ENCODE measurements at regions of chr6 and their contacts with region 1.

Region 1: DNA sequence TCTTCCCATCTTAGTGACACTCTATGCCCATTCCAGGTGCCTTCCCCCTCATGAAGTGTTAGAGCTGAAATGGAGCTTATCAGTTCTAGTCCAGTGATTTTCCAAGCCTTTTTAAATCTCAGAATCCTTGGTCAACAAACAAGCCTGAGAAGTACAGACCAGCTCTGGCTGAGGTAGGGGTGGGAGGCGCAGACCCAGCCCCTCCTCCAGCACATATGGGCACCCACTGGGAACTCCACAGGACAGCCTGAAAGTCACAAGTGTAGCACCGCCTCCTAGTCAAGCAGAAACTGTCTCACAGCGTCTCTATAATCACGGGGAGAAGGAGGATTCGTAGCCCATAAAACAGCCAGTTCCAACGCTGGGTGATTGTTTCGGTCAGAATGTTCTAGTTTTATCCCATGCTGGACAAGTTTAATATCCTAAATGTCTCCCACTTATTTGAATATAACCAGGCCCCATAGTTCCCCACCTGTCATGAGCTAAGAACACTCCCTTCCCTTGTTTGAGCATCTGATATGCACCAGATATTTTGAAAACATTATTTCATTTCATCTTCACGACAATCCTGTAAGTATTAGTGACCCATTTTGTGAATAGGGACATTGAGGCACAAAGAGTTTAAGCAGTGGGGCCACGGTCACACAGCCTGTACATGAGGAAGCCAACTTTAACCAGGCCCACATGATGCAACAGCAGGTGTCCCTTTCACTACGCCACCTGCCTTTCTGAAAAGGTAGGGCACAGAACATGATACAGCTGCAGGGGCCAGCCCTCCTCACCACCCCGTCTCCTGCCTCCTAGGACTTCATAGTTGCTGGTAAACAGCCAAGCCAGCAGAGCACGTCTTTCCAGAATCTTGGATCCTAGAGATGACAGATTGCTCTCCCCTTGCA is 40.1 kb downstream of the TRAF3IP2 start:
- DNase-seq: no peak
- ATAC-seq: peak; percentile 93
- H3K4me3 ChIP-seq: no peak overlapping the region
- H3K27ac ChIP-seq: no peak overlapping the region
- H3K4me1 ChIP-seq: peaks cover 0 to 11% of the 10 kb centered on the region in 2 experiments; a peak in 1 of 4 replicates
- H3K27me3 ChIP-seq: no peaks in the 10 kb centered on the region
- CTCF ChIP-seq: peak; percentile 5 to 55 (median 50); a peak in 4 of 6 replicates
- POLR2A ChIP-seq: no peak
- RAD21 ChIP-seq: peak; percentile 34; the same call in 1 of the 2 replicates

Region 2: DNA sequence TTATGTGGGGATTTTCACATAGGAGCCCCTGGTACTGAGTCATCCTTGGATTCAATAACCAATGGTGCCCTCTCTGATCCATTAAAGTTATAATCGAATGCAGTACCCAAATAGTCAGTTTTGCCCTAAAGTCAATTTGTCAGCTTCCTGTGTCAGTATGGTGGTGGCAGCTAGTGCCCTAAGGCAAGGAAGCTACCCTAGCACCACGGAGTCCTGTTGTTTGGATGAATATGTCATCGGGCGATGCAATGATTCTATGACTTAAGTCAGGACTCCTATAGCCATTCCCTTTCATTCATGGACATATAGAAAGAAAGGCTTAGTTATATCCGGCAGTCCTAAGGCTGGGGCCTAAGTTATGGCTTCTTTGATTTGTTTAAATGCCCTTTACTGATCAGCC is 1675.5 kb before region 1 on chr6:
- CTCF ChIA-PET with region 1: no interaction called
- POLR2A ChIA-PET with region 1: no interaction called
- RAD21 ChIA-PET with region 1: no interaction called
- intact Hi-C with region 1: no loop called
- DNase-seq: no peak
- ATAC-seq: no peak
- H3K4me3 ChIP-seq: no peak overlapping the region
- H3K27ac ChIP-seq: no peak overlapping the region
- H3K4me1 ChIP-seq: peaks cover 14 to 25% of the 10 kb centered on the region in 2 experiments
- H3K27me3 ChIP-seq: no peaks in the 10 kb centered on the region
- CTCF ChIP-seq: no peak
- POLR2A ChIP-seq: no peak
- RAD21 ChIP-seq: no peak

Region 3: DNA sequence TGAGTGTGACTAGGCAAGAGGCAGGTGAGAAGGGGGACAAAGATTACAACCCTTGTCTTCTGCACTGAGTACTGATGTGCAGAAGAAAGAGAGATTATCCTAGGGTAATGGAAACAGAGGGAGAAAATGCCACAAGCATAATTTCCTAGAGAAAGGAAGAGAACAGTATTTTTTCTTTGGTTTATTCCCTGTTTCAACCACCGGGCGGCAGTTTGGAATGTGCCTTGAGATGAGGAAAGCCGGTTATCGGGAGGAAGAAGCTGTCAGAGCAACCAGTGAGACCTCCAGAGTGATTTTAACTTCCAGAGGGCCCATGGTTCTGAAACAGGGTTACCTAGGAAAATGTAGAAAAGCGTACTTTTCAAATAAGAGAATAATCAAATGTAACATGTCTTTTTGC is 203.9 kb before region 1 on chr6:
- CTCF ChIA-PET with region 1: no interaction called
- POLR2A ChIA-PET with region 1: no interaction called
- RAD21 ChIA-PET with region 1: no interaction called
- intact Hi-C with region 1: loop called (anchors 10 kb)
- DNase-seq: peak; percentile 10
- ATAC-seq: peak; percentile 73
- H3K4me3 ChIP-seq: no peak overlapping the region
- H3K27ac ChIP-seq: no peak overlapping the region
- H3K4me1 ChIP-seq: no peaks in the 10 kb centered on the region
- H3K27me3 ChIP-seq: no peaks in the 10 kb centered on the region
- CTCF ChIP-seq: peak; percentile 59 to 71 (median 63)
- POLR2A ChIP-seq: no peak
- RAD21 ChIP-seq: peak; percentile 77